ENCODE measurements at regions of chr7 and their contacts with region 1.

Region 1: DNA sequence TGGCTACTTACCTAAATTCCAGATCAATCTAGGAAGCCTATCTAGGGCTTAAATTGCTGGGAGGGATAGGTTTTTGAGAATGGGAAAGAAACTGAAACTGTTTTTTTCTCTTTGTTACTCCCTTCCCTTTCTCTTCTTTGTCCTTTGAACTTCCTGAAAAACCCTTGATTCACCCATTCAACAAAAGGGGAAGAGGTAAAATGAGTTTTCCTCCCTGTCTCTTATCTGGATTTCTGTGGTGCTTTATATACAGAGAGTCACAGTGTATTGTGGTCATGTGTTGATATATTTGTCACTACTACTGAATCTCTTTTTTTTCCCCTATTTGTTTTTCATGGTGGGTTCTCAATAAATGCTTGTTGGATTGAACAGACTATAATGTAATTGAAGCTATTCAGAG is 19.8 kb upstream of the NUP205 start:
- DNase-seq: no peak
- H3K4me3 ChIP-seq: no peak overlapping the region
- H3K27ac ChIP-seq: no peak overlapping the region
- H3K4me1 ChIP-seq: no peaks in the 10 kb centered on the region
- H3K27me3 ChIP-seq: no peaks in the 10 kb centered on the region
- CTCF ChIP-seq: no peak

Region 2: DNA sequence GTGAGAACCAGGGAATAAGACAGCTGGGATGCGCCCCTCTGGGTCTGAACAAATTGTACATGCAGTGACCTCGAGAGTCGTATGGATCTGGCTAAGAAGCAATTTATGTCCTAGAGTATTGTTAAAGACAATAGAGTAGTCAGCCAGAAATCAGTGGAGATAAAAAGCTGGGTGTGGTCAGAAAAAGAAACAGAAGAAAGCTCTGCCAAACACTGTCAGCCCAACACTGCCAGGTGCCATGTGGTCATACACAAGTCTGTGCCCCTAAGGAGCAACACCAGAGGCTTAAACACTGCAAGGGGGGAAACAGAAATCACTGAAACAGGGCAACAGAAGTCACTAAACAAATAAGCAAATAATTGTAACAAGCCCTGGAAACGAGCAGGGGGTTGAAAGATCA is 90.1 kb before region 1 on chr7:
- CTCF ChIA-PET with region 1: no interaction called
- dilution Hi-C with region 1: no loop called
- in situ Hi-C with region 1: no loop called
- intact Hi-C with region 1: no loop called
- DNase-seq: no peak
- H3K4me3 ChIP-seq: no peak overlapping the region
- H3K27ac ChIP-seq: no peak overlapping the region
- H3K4me1 ChIP-seq: no peaks in the 10 kb centered on the region
- H3K27me3 ChIP-seq: no peaks in the 10 kb centered on the region
- CTCF ChIP-seq: no peak

Region 3: GRCh38 chr7:135558337-135558767 is 20.4 kb after region 1 on chr7:
- CTCF ChIA-PET with region 1: no interaction called
- dilution Hi-C with region 1: no loop called
- in situ Hi-C with region 1: no loop called
- intact Hi-C with region 1: loop called (anchors 2 kb)
- DNase-seq: peak; percentile 64
- H3K4me3 ChIP-seq: peak overlapping the region; percentile 76 to 83 (median 79)
- H3K27ac ChIP-seq: peak overlapping the region; percentile 94
- H3K4me1 ChIP-seq: peaks cover 11% of the 10 kb centered on the region
- H3K27me3 ChIP-seq: no peaks in the 10 kb centered on the region
- CTCF ChIP-seq: peak; percentile 39 to 64

Region 4: DNA sequence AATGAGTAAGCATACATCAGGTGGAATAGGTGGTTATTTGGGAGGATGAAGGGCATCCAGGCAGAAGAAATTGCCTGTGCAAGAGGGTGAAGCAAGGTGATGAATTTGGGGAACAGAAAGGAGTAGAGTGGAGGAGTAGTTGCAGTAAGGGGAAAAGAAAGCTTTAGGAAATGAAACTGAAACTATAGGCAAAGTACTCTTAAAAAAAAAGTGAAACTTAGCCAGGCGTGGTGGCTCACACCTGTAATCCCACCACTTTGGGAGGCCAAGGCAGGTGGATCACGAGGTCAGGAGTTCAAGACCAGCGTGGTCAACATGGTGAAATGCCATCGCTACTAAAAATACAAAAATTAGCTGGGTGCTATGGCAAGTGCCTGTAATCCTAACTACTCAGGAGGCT is 37.4 kb after region 1 on chr7:
- CTCF ChIA-PET with region 1: no interaction called
- dilution Hi-C with region 1: no loop called
- in situ Hi-C with region 1: no loop called
- intact Hi-C with region 1: no loop called
- DNase-seq: no peak
- H3K4me3 ChIP-seq: no peak overlapping the region
- H3K27ac ChIP-seq: no peak overlapping the region
- H3K4me1 ChIP-seq: no peaks in the 10 kb centered on the region
- H3K27me3 ChIP-seq: no peaks in the 10 kb centered on the region
- CTCF ChIP-seq: no peak

Region 5: GRCh38 chr7:136275794-136276193 is 737.9 kb after region 1 on chr7:
- CTCF ChIA-PET with region 1: no interaction called
- dilution Hi-C with region 1: no loop called
- in situ Hi-C with region 1: no loop called
- intact Hi-C with region 1: no loop called
- DNase-seq: no peak
- H3K4me3 ChIP-seq: no peak overlapping the region
- H3K27ac ChIP-seq: no peak overlapping the region
- H3K4me1 ChIP-seq: no peaks in the 10 kb centered on the region
- H3K27me3 ChIP-seq: no peaks in the 10 kb centered on the region
- CTCF ChIP-seq: no peak

Measured in mammary epithelial cell (primary cell).